Motor neuron (in vitro differentiated cells): ENCODE measurements at regions of chr2 and their contacts with region 1.

Region 1: DNA sequence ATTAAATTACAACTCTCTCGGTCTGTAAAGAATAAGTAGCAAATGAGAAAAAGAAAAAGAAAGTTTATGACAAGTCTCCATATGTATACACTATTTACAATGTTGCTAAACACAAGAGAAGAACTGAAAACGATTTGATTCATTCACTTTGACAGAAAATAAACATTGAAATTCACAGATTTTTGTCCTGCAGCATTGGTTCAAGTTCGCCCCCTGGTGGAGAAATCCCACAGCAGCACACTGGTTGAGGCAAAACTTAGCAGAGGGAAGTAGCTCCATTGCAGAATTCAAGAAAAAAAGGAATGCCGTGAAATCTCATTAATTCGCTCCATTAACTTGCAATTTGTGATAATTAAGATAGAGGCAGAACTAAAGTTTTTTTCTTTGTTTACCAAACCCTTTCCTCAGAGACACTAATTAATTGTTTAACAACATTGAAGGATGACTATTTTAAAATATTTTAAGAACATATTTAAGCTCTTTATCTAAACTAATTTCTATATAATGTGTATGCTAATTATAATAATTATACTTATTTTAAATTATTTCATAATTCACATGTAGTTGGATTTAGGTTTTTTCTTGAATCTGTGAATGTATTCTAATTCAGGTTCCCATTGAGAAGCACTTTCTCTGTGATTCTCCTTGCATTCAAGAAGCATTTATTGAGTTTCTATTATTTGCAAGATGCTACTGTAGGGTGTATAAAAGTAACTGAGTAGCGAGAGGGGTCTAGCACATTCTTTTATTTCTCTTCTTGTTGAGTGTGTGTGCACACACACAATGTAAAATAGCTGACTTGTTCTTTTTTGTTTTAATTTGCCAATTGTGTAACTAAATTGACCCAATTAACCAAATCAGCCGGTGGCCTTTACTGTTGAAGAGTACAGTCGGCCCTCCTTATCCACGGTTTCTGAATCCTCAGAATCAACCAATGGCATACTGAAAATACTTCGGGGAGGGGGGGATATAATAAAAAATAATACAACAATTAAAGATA is 74.1 kb downstream of the COL4A3 start:
- ATAC-seq: peak in 3 of 8 experiments; percentile 36 to 59 (median 44)
- H3K4me3 ChIP-seq: no peak overlapping the region
- H3K27ac ChIP-seq: no peak overlapping the region
- H3K4me1 ChIP-seq: no peaks in the 10 kb centered on the region

Region 2: DNA sequence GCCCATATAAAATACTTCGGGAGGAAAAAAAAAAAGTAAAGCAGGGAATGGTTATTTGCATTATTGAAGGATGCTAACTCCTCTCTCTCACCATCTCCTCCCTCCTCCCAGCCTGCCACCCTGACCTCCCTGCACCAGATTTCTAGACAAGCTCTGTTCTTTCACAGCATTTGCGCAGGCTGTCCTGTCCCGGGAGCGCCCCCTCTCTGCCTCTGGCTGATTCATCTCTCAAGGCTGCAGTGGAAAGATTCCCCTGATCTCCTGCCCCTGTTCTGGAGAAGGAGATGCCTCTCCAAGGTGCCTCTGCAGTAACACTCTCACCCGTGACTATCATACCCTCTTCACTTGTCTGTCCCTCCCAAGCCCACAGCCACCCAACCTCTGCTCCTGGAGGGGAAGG is 113.0 kb before region 1 on chr2:
- in situ Hi-C with region 1: loop called in 4 of 9 experiments (anchors 5 to 25 kb)
- ATAC-seq: no peak
- H3K4me3 ChIP-seq: no peak overlapping the region
- H3K27ac ChIP-seq: no peak overlapping the region
- H3K4me1 ChIP-seq: no peaks in the 10 kb centered on the region

Region 3: GRCh38 chr2:227406177-227407031 is 167.9 kb after region 1 on chr2:
- in situ Hi-C with region 1: no loop called
- ATAC-seq: peak; percentile 63 to 96 (median 90)
- H3K4me3 ChIP-seq: no peak overlapping the region
- H3K27ac ChIP-seq: no peak overlapping the region
- H3K4me1 ChIP-seq: peaks cover 7 to 8% of the 10 kb centered on the region in 2 donors